Ascending aorta (tissue), 2 donors: ENCODE measurements at regions of chr1 and their contacts with region 1.

Region 1: DNA sequence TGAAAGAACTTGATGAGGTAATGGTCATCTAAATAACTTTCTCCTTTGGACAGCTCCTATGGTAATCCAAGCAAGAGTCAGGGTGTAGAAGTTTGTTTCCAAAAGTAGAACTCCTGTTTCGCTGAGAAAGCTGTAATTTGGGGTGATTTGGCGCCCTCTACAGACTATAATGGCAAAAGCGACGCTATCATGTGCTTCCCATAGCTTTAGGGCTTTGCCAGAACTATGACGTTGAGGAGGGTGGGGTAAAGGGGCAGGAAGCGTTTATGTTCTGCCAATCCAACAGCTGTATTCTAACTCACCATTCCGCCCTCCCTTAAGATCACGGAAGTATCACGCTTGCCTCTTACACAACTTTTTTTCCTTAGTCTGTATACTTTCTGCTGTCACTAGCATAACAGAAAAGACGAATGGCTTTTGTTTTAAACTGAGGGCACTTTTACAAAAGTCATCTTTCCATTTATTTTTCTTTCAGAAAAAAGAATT is at the start of gene FMO4:
- DNase-seq: peak; percentile 85 to 97
- H3K4me3 ChIP-seq: peak within 1 kb of the TSS; percentile 52 to 61
- H3K27ac ChIP-seq: peak within 1 kb of the TSS; percentile 87
- H3K4me1 ChIP-seq: peaks cover 2 to 23% of the 10 kb centered on the region in 2 donors
- H3K27me3 ChIP-seq: no peaks in the 10 kb centered on the region
- CTCF ChIP-seq: peak; percentile 59 to 84 (median 64)
- total RNA-seq, gene FMO4: 30.1 TPM

Region 2: GRCh38 chr1:170993151-170993550 is 320.7 kb before region 1 on chr1:
- intact Hi-C with region 1: no loop called
- DNase-seq: no peak
- H3K4me3 ChIP-seq: no peak overlapping the region
- H3K27ac ChIP-seq: no peak overlapping the region
- H3K4me1 ChIP-seq: no peaks in the 10 kb centered on the region
- H3K27me3 ChIP-seq: no peaks in the 10 kb centered on the region
- CTCF ChIP-seq: no peak

Region 3: DNA sequence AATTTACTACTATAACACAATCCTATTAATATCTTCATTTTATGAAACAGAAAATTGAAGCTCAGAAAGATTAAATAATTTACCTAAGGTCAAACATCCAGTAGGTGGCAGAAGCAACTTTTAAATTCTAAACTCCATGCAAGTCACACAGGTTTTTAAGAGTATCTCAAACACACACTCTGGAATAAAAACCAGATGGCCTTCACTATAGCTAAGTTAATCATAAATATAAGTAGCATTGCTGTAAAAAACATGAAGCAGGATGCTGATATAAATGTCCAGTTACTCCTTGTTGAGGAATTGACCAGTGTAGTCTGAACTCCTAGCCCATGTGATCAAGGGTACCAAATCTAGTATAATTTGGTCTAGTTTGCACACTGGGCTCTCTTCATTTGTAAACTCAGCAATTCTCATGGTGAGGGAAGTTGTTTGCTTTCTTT is 232.5 kb before region 1 on chr1:
- intact Hi-C with region 1: loop called (anchors 1 kb)
- DNase-seq: no peak
- H3K4me3 ChIP-seq: peak overlapping the region in 1 of 2 donors; percentile 24
- H3K27ac ChIP-seq: peak overlapping the region; percentile 78 to 80
- H3K4me1 ChIP-seq: peaks cover 0 to 10% of the 10 kb centered on the region in 2 donors
- H3K27me3 ChIP-seq: no peaks in the 10 kb centered on the region
- CTCF ChIP-seq: peak; percentile 41 to 56 (median 43)

Region 4: GRCh38 chr1:171188388-171189266 is 125.3 kb before region 1 on chr1:
- intact Hi-C with region 1: loop called (anchors 5 kb)
- DNase-seq: peak in 1 of 2 donors; percentile 74
- H3K4me3 ChIP-seq: peak overlapping the region; percentile 54 to 58
- H3K27ac ChIP-seq: peak overlapping the region; percentile 74 to 83
- H3K4me1 ChIP-seq: peaks cover 1 to 6% of the 10 kb centered on the region in 2 donors
- H3K27me3 ChIP-seq: no peaks in the 10 kb centered on the region
- CTCF ChIP-seq: peak; percentile 49 to 80 (median 77)

Region 5: GRCh38 chr1:171251042-171251951 is 62.6 kb before region 1 on chr1:
- intact Hi-C with region 1: no loop called
- DNase-seq: peak in 1 of 2 donors; percentile 71
- H3K4me3 ChIP-seq: peak overlapping the region; percentile 53 to 91
- H3K27ac ChIP-seq: no peak overlapping the region
- H3K4me1 ChIP-seq: no peaks in the 10 kb centered on the region
- H3K27me3 ChIP-seq: no peaks in the 10 kb centered on the region
- CTCF ChIP-seq: peak; percentile 27 to 70 (median 45)

Region 6: GRCh38 chr1:171344473-171344820 is 30.6 kb after region 1 on chr1:
- intact Hi-C with region 1: loop called (anchors 2 kb)
- DNase-seq: peak in 1 of 2 donors; percentile 68
- H3K4me3 ChIP-seq: no peak overlapping the region
- H3K27ac ChIP-seq: peak overlapping the region; percentile 48 to 62
- H3K4me1 ChIP-seq: peaks cover 0 to 19% of the 10 kb centered on the region in 2 donors
- H3K27me3 ChIP-seq: no peaks in the 10 kb centered on the region
- CTCF ChIP-seq: no peak

Region 7: DNA sequence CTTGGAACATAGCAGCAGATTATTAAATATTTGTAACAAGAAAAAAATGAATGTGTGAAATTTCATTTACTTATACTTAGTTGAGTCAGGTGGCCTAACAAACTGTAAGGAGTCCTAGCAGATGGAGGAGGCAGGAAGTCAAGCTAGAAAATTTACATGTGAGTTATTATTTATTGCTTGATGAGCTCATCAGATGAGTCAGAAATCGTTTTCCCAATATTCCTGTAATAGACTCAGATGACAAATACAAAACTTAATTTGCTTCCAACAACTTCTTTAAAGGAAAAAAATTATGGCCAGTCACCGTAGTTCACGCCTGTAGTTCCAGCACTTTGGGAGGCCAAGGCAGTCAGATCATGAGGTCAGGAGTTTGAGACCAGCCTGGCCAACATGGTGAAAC is 127.4 kb after region 1 on chr1:
- intact Hi-C with region 1: loop called (anchors 1 kb)
- DNase-seq: no peak
- H3K4me3 ChIP-seq: no peak overlapping the region
- H3K27ac ChIP-seq: peak overlapping the region in 1 of 2 donors; percentile 55
- H3K4me1 ChIP-seq: peaks cover 0 to 9% of the 10 kb centered on the region in 2 donors
- H3K27me3 ChIP-seq: no peaks in the 10 kb centered on the region
- CTCF ChIP-seq: no peak

Region 8: GRCh38 chr1:171530676-171531075 is 216.8 kb after region 1 on chr1:
- intact Hi-C with region 1: no loop called
- DNase-seq: no peak
- H3K4me3 ChIP-seq: no peak overlapping the region
- H3K27ac ChIP-seq: no peak overlapping the region
- H3K4me1 ChIP-seq: no peaks in the 10 kb centered on the region
- H3K27me3 ChIP-seq: no peaks in the 10 kb centered on the region
- CTCF ChIP-seq: no peak